ENCODE measurements at regions of chr3 and their contacts with region 1.

Region 1: DNA sequence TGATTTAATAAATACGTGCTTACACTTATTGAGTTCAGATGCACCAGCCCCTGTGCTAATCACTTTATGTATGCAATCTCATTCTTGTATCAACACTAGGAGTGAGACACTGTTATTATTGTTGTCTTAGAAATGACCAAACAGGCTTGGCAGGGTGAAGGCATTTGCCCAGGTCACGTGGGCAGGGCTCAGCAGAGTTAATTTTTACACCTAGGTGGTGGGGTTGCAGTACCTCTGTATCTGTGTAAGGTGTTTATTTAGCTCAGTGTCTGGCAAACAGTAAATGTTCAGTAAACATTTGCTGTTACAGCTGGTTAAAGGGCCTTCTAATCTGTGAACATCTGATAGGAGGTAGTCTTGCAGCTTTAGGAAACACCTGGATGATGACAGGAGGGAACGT is 200.0 kb downstream of the CACNA2D3 start:
- DNase-seq: peak; percentile 90 to 91
- H3K4me3 ChIP-seq: peak overlapping the region; percentile 10
- H3K4me3 Mint-ChIP-seq: peak overlapping the region; percentile 60
- H3K27ac Mint-ChIP-seq: peak overlapping the region; percentile 92
- H3K4me1 ChIP-seq: peaks cover 22% of the 10 kb centered on the region
- H3K4me1 Mint-ChIP-seq: peaks cover 21% of the 10 kb centered on the region
- H3K27me3 ChIP-seq: no peaks in the 10 kb centered on the region
- H3K27me3 Mint-ChIP-seq: no peaks in the 10 kb centered on the region
- CTCF ChIP-seq: no peak

Region 2: DNA sequence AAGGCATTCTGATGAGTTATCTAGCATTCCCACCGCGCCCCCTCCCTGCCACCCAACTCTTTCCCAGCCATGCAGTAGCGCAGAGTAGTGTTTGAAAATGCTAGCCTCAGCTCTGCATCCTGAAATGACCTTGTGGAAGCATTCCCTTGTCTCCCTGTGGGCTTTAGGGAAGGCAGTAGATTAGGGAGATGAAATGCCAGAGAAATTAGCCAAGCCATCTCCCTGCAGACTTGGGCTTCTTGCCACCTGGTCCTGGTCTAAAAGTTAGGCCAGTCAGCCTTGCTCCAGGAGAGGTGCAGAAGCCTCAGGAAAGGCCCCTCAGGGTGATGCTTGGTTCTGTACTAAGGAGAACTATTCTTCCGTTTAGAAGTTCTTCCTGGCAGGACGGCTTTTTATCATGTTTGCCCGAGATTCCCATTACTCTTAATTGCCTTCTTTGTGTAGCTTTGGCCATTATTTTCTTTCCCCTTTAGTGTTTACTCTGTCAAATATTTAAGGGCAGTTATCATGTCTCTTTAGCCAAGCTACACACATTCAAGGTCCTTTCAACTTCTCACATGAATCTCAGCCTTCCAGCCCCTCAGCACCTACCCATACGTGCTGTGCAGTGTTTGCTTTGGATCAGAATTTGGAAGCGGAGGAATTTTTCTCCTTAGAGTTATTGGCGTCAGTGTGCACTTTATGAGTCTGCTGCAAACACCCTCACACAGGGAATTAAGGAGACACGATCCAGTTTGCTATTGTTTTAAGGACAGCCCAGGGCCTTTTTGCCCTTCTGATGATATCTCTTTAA is 31.4 kb after region 1 on chr3:
- CTCF ChIA-PET with region 1: no interaction called
- POLR2A ChIA-PET with region 1: no interaction called
- intact Hi-C with region 1: loop called (anchors 1 kb)
- DNase-seq: no peak
- H3K4me3 ChIP-seq: no peak overlapping the region
- H3K4me3 Mint-ChIP-seq: peak overlapping the region; percentile 42
- H3K27ac Mint-ChIP-seq: no peak overlapping the region
- H3K4me1 ChIP-seq: peaks cover 8% of the 10 kb centered on the region; the same call in 1 of the 2 replicates
- H3K4me1 Mint-ChIP-seq: peaks cover 16% of the 10 kb centered on the region
- H3K27me3 ChIP-seq: no peaks in the 10 kb centered on the region
- H3K27me3 Mint-ChIP-seq: no peaks in the 10 kb centered on the region
- CTCF ChIP-seq: no peak